Activated T-helper 1 cell treated with anti-CD3 and anti-CD28 coated beads, Interleukin-12 subunit alpha, Interleukin-12 subunit beta, Interleukin-2, Interleukin-4 antibody, amounts not matched to agents 30 ng/mL and 10 ng/mL and 1 ng/mL, durations not matched to agents 14 hours and 24 hours and 36 hours (primary cell): ENCODE measurements at regions of chr7 and their contacts with region 1.

Region 1: DNA sequence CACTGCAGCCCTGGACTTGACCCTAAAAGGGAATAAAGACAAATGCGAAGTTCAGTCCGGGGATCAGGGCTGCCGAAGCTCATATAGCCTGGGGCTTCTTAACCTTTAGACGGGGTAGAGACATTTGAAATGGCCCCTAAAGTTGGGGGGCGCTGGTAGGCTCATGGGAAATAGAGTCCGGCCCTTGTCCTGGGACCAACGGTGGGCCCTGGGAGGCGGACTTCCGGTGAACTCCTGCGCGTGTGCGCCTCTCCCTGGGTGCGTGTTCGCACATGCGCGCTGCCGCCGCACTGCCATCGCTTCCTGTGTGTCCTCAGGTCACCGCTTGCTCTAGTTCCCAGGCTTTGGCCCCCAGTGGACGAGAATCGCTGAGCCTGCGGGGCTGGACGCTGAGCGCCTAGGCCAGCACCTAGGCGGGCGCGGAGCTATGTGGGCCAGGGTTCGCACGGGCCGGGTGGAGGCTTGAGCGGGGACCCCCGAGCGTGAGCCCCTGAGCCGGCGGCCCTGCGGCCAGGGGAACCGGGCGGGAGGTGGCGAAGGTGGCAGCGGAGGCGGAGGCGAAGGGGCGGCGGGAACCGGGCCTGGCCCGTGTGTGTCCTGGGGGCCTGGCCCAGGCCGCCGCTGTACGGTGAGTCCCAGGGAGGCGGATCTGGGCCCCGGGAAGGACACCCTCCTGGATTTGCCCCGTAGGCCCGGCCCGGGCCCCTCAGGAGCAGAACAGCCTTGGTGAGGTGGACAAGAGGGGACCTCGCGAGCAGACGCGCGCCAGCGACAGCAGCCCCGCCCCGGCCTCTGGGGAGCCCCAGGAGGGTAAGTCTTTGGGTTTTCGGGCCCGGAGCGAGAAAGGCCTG is 23.0 kb upstream of the ZNF12 start:
- DNase-seq: peak; percentile 81
- H3K4me3 Mint-ChIP-seq: peak overlapping the region; percentile 93
- H3K27ac Mint-ChIP-seq: peak overlapping the region; percentile 80
- H3K4me1 Mint-ChIP-seq: peaks cover 27% of the 10 kb centered on the region
- H3K27me3 Mint-ChIP-seq: peaks cover 2% of the 10 kb centered on the region

Region 2: GRCh38 chr7:6831018-6831725 is 101.5 kb after region 1 on chr7:
- intact Hi-C with region 1: loop called (anchors 5 kb)
- DNase-seq: no peak
- H3K4me3 Mint-ChIP-seq: no peak overlapping the region
- H3K27ac Mint-ChIP-seq: no peak overlapping the region
- H3K4me1 Mint-ChIP-seq: no peaks in the 10 kb centered on the region
- H3K27me3 Mint-ChIP-seq: peaks cover 20% of the 10 kb centered on the region

Region 3: GRCh38 chr7:7237201-7237977 is 507.7 kb after region 1 on chr7:
- intact Hi-C with region 1: no loop called
- DNase-seq: no peak
- H3K4me3 Mint-ChIP-seq: no peak overlapping the region
- H3K27ac Mint-ChIP-seq: no peak overlapping the region
- H3K4me1 Mint-ChIP-seq: peaks cover 6% of the 10 kb centered on the region
- H3K27me3 Mint-ChIP-seq: no peaks in the 10 kb centered on the region